ENCODE measurements at regions of chr19 and their contacts with region 1.

Region 1: DNA sequence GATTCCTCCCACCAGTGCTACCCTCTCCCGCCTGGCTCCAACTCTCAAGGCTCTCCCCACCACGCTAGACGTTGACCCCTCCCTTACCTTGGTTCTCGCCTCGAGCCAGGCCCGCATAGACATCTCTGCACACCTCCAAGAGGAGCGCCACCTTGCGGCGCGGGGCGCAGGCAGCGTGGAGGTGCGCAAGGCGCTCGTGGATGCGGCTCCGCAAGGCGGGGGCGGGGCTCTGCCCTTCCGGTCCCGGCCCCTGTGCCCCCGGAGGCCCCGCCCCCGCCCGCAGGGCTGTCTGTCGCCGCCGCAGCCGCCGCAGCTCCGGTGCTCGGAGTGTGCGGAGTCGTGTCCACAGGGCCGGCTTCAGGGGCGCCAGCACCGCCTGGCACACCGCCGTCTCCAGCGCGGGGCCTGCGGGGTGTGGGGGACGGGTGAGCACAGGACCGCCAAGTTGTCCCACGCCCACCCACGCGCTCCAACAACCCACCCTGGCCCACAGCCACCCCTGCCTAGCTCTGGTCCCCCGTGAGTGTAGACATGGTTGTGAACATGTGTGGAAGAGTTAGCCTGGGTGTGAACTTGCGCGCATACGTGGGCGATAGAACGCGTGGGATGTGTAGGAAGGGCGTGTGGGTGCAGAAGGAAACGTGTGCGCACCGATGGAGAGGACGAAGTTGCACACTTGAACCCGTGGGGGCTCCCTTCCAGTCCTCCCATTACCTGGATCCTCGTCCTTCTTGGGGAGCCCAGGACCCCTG is 8.0 kb downstream of the RINL start:
- DNase-seq: no peak
- H3K4me3 ChIP-seq: peak overlapping the region; percentile 59
- CTCF ChIP-seq: peak; percentile 85

Region 2: DNA sequence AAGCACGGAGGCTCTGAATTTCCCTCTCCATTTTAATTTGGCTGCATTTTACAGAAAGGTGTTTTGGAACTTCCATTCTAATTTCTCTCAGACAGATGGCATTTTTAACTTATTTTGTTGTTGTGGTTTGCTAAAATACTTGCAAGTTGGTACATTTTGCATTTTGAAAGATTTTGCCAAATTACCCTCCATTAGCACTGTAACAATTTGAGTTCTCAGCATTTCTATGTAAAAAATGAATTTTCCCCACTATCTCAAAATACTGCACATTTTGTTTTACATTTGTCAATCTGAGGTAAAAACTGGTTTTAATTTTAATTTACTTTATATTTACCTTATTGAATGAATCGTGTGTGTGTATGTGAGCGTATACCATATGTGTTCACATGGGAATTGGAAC is 13.2 kb before region 1 on chr19:
- CTCF ChIA-PET with region 1: interaction called, 10 read pairs
- POLR2A ChIA-PET with region 1: no interaction called
- DNase-seq: no peak
- H3K4me3 ChIP-seq: no peak overlapping the region
- CTCF ChIP-seq: no peak

Region 3: GRCh38 chr19:38891771-38892170 is 21.7 kb after region 1 on chr19:
- CTCF ChIA-PET with region 1: interaction called, 70 read pairs
- POLR2A ChIA-PET with region 1: no interaction called
- DNase-seq: no peak
- H3K4me3 ChIP-seq: no peak overlapping the region
- CTCF ChIP-seq: no peak